T-cell (primary cell): ENCODE measurements at regions of chr7 and their contacts with region 1.

Region 1: DNA sequence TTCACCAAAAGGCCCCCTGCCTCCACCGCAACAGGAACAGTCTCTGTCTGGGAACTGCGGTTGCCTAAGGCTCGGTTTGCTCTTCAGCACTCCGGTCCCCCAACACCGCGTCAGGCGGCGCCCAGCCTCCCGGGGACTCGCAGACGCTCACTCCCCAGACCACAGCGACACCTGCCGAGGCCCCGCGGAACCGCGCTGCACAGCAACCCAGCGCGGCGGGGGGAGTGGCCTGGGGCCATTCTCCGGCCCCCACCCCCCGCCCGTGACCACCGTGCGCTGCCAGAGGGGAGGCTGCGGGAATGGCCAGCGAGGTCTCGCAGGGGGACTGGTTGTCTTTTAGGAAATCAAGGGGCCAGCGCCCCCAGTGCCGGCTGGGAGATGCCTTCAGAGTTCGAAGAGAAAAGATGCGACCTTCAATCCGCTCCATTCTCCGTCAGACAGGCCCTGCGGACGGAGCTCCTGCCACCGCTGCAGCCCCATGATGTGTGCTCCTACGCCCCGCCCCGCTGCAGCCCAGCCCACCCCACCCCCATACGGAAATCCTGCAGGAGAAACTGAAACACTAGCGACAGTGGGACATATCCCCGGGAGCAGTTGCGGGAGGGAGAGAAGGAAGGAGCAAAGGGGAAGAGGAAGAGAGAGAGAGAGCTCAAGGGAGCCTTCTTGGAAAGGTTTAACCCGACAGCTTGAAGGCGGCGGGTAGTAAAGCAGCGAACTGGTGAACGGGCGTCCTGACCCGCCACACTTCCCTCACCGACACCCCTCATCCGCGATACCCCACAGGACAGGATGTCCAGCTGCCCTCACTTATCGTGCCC is 137.4 kb upstream of the CDCA7L start:
- DNase-seq: peak; percentile 56 to 86 (median 75)
- ATAC-seq: peak; percentile 97 to 98 (median 97)
- H3K4me3 ChIP-seq: peak overlapping the region; percentile 67 to 70
- H3K4me3 Mint-ChIP-seq: peak overlapping the region; percentile 75 to 81 (median 79)
- H3K27ac ChIP-seq: peak overlapping the region; percentile 35
- H3K27ac Mint-ChIP-seq: peak overlapping the region; percentile 32 to 55
- H3K4me1 ChIP-seq: peaks cover 0 to 10% of the 10 kb centered on the region in 2 experiments
- H3K4me1 Mint-ChIP-seq: peaks cover 10 to 17% (median 15%) of the 10 kb centered on the region in 3 donors
- H3K27me3 ChIP-seq: peaks cover 1 to 3% of the 10 kb centered on the region in 2 experiments
- H3K27me3 Mint-ChIP-seq: peaks cover 10 to 18% of the 10 kb centered on the region in 2 donors

Region 2: GRCh38 chr7:21253740-21254687 is 829.1 kb before region 1 on chr7:
- CTCF ChIA-PET with region 1: interaction called, 4 to 13 read pairs
- POLR2A ChIA-PET with region 1: no interaction called
- DNase-seq: peak in 26 of 35 experiments; percentile 1 to 57 (median 17)
- ATAC-seq: peak; percentile 60 to 84 (median 67)
- H3K4me3 ChIP-seq: no peak overlapping the region
- H3K4me3 Mint-ChIP-seq: peak overlapping the region in 2 of 3 donors; percentile 13 to 47
- H3K27ac ChIP-seq: no peak overlapping the region
- H3K27ac Mint-ChIP-seq: no peak overlapping the region
- H3K4me1 ChIP-seq: no peaks in the 10 kb centered on the region
- H3K4me1 Mint-ChIP-seq: peaks cover 5 to 10% (median 9%) of the 10 kb centered on the region in 3 donors
- H3K27me3 ChIP-seq: peaks cover 2 to 8% of the 10 kb centered on the region in 2 experiments
- H3K27me3 Mint-ChIP-seq: peaks cover 57 to 59% of the 10 kb centered on the region in 2 donors

Region 3: DNA sequence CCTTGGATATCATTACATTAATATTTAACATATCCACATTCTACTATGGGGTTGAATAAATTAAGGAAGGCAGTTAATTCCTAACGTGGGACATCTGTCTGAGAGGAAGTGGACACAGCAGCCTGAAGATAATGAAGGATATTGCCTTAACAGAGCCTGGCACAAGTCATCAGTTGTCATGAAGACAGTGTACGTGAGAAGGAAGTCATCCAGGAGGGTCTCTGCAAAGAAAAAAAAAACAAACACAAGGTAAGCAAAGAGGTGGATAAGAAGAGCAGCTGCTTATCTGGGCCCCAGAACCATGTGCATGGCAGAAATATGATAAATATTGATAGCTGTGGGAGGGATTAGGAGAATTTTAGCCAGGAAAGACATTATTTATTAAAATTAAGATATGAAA is 83.8 kb after region 1 on chr7:
- CTCF ChIA-PET with region 1: no interaction called
- POLR2A ChIA-PET with region 1: no interaction called
- DNase-seq: no peak
- ATAC-seq: no peak
- H3K4me3 ChIP-seq: no peak overlapping the region
- H3K4me3 Mint-ChIP-seq: no peak overlapping the region
- H3K27ac ChIP-seq: no peak overlapping the region
- H3K27ac Mint-ChIP-seq: no peak overlapping the region
- H3K4me1 ChIP-seq: no peaks in the 10 kb centered on the region
- H3K4me1 Mint-ChIP-seq: no peaks in the 10 kb centered on the region
- H3K27me3 ChIP-seq: no peaks in the 10 kb centered on the region
- H3K27me3 Mint-ChIP-seq: no peaks in the 10 kb centered on the region

Region 4: DNA sequence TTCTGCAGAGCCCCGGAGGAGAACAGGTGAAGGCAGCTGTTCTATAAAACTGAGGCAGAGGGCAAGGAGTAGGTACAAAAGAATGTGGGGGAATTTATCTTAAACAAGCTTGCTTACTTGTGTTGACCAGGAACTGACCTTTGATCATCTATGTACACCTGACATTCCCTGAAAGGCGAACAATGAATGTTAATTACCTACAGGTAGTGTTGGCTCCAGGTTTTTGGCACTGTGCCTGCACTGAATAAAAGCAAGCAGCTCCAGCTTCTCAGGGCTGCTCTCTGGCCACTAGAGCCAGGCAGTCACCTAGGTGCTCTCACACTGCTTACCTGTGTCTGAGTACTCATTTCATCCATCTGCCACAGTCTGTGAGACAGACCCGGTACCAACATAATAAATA is 186.9 kb after region 1 on chr7:
- CTCF ChIA-PET with region 1: no interaction called
- POLR2A ChIA-PET with region 1: no interaction called
- DNase-seq: no peak
- ATAC-seq: no peak
- H3K4me3 ChIP-seq: no peak overlapping the region
- H3K4me3 Mint-ChIP-seq: no peak overlapping the region
- H3K27ac ChIP-seq: no peak overlapping the region
- H3K27ac Mint-ChIP-seq: no peak overlapping the region
- H3K4me1 ChIP-seq: peaks cover 0 to 3% of the 10 kb centered on the region in 2 experiments
- H3K4me1 Mint-ChIP-seq: peaks cover 6 to 10% (median 10%) of the 10 kb centered on the region in 3 donors
- H3K27me3 ChIP-seq: no peaks in the 10 kb centered on the region
- H3K27me3 Mint-ChIP-seq: peaks cover 6 to 8% of the 10 kb centered on the region in 2 donors